Activated B cell treated with CpG ODN at 0.5 μM for 24 hours (primary cell): ENCODE measurements at regions of chr1 and their contacts with region 1.

Region 1: GRCh38 chr1:22057861-22058260 is 5.4 kb downstream of the CDC42 start:
- DNase-seq: no peak
- ATAC-seq: no peak
- H3K4me3 Mint-ChIP-seq: no peak overlapping the region
- H3K27ac Mint-ChIP-seq: no peak overlapping the region
- H3K4me1 Mint-ChIP-seq: peaks cover 82% of the 10 kb centered on the region
- H3K27me3 Mint-ChIP-seq: no peaks in the 10 kb centered on the region
- CTCF ChIP-seq: no peak

Region 2: GRCh38 chr1:20485527-20486456 is 1572.1 kb before region 1 on chr1 and contains the start of gene CAMK2N1:
- CTCF ChIA-PET with region 1: no interaction called
- POLR2A ChIA-PET with region 1: interaction called, 11 read pairs
- intact Hi-C with region 1: no loop called
- DNase-seq: peak; percentile 36
- ATAC-seq: peak; percentile 65
- H3K4me3 Mint-ChIP-seq: peak within 1 kb of the TSS; percentile 82
- H3K27ac Mint-ChIP-seq: no peak within 1 kb of the TSS
- H3K4me1 Mint-ChIP-seq: peaks cover 20% of the 10 kb centered on the region
- H3K27me3 Mint-ChIP-seq: peaks cover 59% of the 10 kb centered on the region
- CTCF ChIP-seq: no peak
- total RNA-seq, gene CAMK2N1: 0.18 and 0.71 TPM in 2 replicates

Region 3: DNA sequence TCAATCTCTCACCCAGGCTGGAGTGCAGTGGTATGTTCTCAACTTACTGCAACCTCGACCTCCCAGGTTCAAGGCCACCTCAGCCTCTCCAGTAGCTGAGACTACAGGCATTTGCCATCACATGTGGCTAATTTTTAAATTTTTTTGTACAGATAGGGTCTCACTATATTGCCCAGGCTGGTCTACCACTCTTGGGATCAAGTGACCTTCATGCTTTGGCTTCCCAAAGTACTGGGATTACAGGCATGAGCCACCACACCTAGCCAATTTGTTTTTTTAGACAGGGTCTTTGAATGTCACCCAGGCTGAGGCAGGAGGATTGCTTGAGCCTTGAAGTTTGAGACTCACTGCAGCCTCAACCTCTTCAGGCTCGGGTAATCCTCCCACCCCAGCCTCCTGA is 264.8 kb before region 1 on chr1:
- CTCF ChIA-PET with region 1: no interaction called
- POLR2A ChIA-PET with region 1: no interaction called
- intact Hi-C with region 1: no loop called
- DNase-seq: no peak
- ATAC-seq: no peak
- H3K4me3 Mint-ChIP-seq: no peak overlapping the region
- H3K27ac Mint-ChIP-seq: no peak overlapping the region
- H3K4me1 Mint-ChIP-seq: peaks cover 4% of the 10 kb centered on the region
- H3K27me3 Mint-ChIP-seq: no peaks in the 10 kb centered on the region
- CTCF ChIP-seq: no peak

Region 4: DNA sequence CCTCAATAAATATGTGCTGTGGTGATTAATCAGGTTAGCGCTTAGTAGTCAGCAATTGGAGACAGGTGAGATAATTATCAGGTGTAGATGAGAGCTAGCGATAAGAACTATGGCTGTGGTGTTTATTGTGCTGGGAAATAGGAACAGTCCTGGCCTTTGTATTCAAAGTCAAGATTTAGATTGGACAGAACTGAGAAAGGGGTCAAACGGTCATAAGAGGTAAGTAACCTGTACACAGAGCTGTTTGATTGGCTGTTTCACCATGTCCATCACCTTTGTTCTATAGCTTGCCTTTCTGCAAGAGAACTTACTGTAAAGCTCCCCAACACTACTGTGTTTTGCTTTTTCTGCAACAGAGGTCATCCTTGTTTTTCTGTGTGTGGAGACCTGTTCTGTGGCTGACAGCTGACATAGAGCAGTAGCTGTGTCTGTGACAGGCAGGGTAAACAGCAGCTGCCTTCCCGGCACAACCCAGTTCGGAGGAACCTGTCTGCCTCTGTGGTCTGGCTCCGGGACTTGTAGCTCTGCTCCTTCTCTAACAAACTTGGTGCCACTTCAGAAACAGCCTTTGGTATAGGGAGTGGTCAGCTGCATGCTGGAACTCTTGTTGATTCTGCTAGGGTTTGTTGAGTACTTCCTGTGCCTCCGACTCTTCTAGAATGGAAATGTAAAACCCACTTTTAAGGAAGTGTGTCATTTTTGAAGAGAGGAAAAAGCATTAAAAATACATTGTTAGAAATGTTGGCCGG is 26.5 kb before region 1 on chr1:
- CTCF ChIA-PET with region 1: interaction called, 5 read pairs
- POLR2A ChIA-PET with region 1: interaction called, 659 read pairs
- intact Hi-C with region 1: no loop called
- DNase-seq: no peak
- ATAC-seq: peak; percentile 52
- H3K4me3 Mint-ChIP-seq: peak overlapping the region; percentile 49
- H3K27ac Mint-ChIP-seq: peak overlapping the region; percentile 79
- H3K4me1 Mint-ChIP-seq: peaks cover 37% of the 10 kb centered on the region
- H3K27me3 Mint-ChIP-seq: no peaks in the 10 kb centered on the region
- CTCF ChIP-seq: no peak

Region 5: GRCh38 chr1:22105611-22106207 is 47.8 kb after region 1 on chr1:
- CTCF ChIA-PET with region 1: no interaction called
- POLR2A ChIA-PET with region 1: no interaction called
- intact Hi-C with region 1: no loop called
- DNase-seq: no peak
- ATAC-seq: peak; percentile 84
- H3K4me3 Mint-ChIP-seq: no peak overlapping the region
- H3K27ac Mint-ChIP-seq: peak overlapping the region; percentile 51
- H3K4me1 Mint-ChIP-seq: peaks cover 52% of the 10 kb centered on the region
- H3K27me3 Mint-ChIP-seq: no peaks in the 10 kb centered on the region
- CTCF ChIP-seq: peak; percentile 58